ENCODE measurements at regions of chr6 and their contacts with region 1.

Region 1: GRCh38 chr6:31702819-31703522 is at the start of gene ABHD16A:
- DNase-seq: peak; percentile 93 to 96
- H3K4me3 ChIP-seq: peak within 1 kb of the TSS; percentile 83
- H3K27ac ChIP-seq: peak within 1 kb of the TSS; percentile 77
- H3K4me1 ChIP-seq: peaks cover 14% of the 10 kb centered on the region
- H3K27me3 ChIP-seq: no peaks in the 10 kb centered on the region
- CTCF ChIP-seq: no peak
- total RNA-seq, gene ABHD16A: 31.3 and 35.2 TPM in 2 replicates

Region 2: GRCh38 chr6:31473780-31474725 is 228.9 kb before region 1 on chr6:
- CTCF ChIA-PET with region 1: no interaction called
- POLR2A ChIA-PET with region 1: interaction called, 15 read pairs
- intact Hi-C with region 1: no loop called
- DNase-seq: peak; percentile 39 to 71
- H3K4me3 ChIP-seq: no peak overlapping the region
- H3K27ac ChIP-seq: peak overlapping the region; percentile 18
- H3K4me1 ChIP-seq: peaks cover 14% of the 10 kb centered on the region
- H3K27me3 ChIP-seq: no peaks in the 10 kb centered on the region
- CTCF ChIP-seq: no peak

Region 3: GRCh38 chr6:31652925-31653718 is 49.8 kb before region 1 on chr6:
- CTCF ChIA-PET with region 1: no interaction called
- POLR2A ChIA-PET with region 1: no interaction called
- intact Hi-C with region 1: loop called (anchors 2 kb)
- DNase-seq: peak in 1 of 2 experiments; percentile 86
- H3K4me3 ChIP-seq: peak overlapping the region; percentile 79
- H3K27ac ChIP-seq: peak overlapping the region; percentile 92
- H3K4me1 ChIP-seq: peaks cover 14% of the 10 kb centered on the region
- H3K27me3 ChIP-seq: no peaks in the 10 kb centered on the region
- CTCF ChIP-seq: no peak; the same call in 1 of the 2 replicates

Region 4: DNA sequence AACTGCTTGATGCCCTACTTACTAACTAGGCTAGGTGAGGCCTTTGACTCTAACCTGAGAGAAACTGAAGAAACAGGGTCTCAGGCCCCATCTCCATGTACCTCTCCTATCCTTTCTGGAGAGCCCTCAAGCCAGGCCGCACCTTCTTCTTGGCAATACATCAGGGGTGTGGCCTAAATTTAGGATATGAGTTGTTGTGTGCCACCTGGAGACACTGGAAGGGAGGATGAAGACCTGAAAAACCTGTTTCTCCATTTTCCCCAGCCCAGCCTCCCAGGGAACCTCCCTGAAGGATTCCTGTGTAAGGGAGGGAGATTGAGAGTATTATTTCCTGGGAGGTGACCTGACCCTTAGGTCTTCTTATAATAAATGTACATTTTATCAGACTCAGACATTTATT is 15.3 kb after region 1 on chr6:
- CTCF ChIA-PET with region 1: no interaction called
- POLR2A ChIA-PET with region 1: interaction called, 33 read pairs
- intact Hi-C with region 1: no loop called
- DNase-seq: peak; percentile 77 to 91
- H3K4me3 ChIP-seq: no peak overlapping the region
- H3K27ac ChIP-seq: no peak overlapping the region; the same call in 1 of the 2 replicates
- H3K4me1 ChIP-seq: peaks cover 42% of the 10 kb centered on the region
- H3K27me3 ChIP-seq: no peaks in the 10 kb centered on the region
- CTCF ChIP-seq: no peak

Region 5: GRCh38 chr6:31729515-31729978 is 26.6 kb after region 1 on chr6:
- CTCF ChIA-PET with region 1: no interaction called
- POLR2A ChIA-PET with region 1: no interaction called
- intact Hi-C with region 1: no loop called
- DNase-seq: peak; percentile 78 to 91
- H3K4me3 ChIP-seq: peak overlapping the region; percentile 81
- H3K27ac ChIP-seq: no peak overlapping the region
- H3K4me1 ChIP-seq: peaks cover 15% of the 10 kb centered on the region
- H3K27me3 ChIP-seq: no peaks in the 10 kb centered on the region
- CTCF ChIP-seq: peak; percentile 6; the same call in 1 of the 2 replicates

Region 6: GRCh38 chr6:32175711-32176475 is 472.9 kb after region 1 on chr6 and contains the start of gene AGPAT1:
- CTCF ChIA-PET with region 1: no interaction called
- POLR2A ChIA-PET with region 1: no interaction called
- intact Hi-C with region 1: no loop called
- DNase-seq: peak; percentile 82 to 96
- H3K4me3 ChIP-seq: peak within 1 kb of the TSS; percentile 98
- H3K27ac ChIP-seq: peak within 1 kb of the TSS; percentile 86
- H3K4me1 ChIP-seq: peaks cover 31% of the 10 kb centered on the region
- H3K27me3 ChIP-seq: no peaks in the 10 kb centered on the region
- CTCF ChIP-seq: no peak
- total RNA-seq, gene AGPAT1: 58.9 and 61.7 TPM in 2 replicates

Measured in PC-9 (cell line).